ENCODE measurements at regions of chr19 and their contacts with region 1.

Region 1: GRCh38 chr19:38685666-38686529 is 38.4 kb downstream of the ACTN4 start:
- DNase-seq: peak; percentile 37
- ATAC-seq: peak; percentile 31
- H3K4me3 Mint-ChIP-seq: no peak overlapping the region
- H3K27ac Mint-ChIP-seq: peak overlapping the region; percentile 84
- H3K4me1 Mint-ChIP-seq: peaks cover 63% of the 10 kb centered on the region
- H3K27me3 Mint-ChIP-seq: no peaks in the 10 kb centered on the region
- CTCF ChIP-seq: peak; percentile 48

Region 2: GRCh38 chr19:38647368-38647965 is 38.4 kb before region 1 on chr19 and contains the start of gene ACTN4:
- CTCF ChIA-PET with region 1: interaction called, 4 read pairs
- POLR2A ChIA-PET with region 1: no interaction called
- intact Hi-C with region 1: loop called (anchors 5 kb)
- DNase-seq: peak; percentile 99
- ATAC-seq: peak; percentile 95
- H3K4me3 Mint-ChIP-seq: peak within 1 kb of the TSS; percentile 97
- H3K27ac Mint-ChIP-seq: peak within 1 kb of the TSS; percentile 87
- H3K4me1 Mint-ChIP-seq: peaks cover 40% of the 10 kb centered on the region
- H3K27me3 Mint-ChIP-seq: peaks cover 10% of the 10 kb centered on the region
- CTCF ChIP-seq: no peak
- total RNA-seq, gene ACTN4: 183 to 189 TPM

Measured in activated CD8-positive, alpha-beta T cell treated with anti-CD3 and anti-CD28 coated beads for 36 hours (primary cell).